Body of pancreas (tissue), 4 donors: ENCODE measurements at regions of chr12 and their contacts with region 1.

Region 1: DNA sequence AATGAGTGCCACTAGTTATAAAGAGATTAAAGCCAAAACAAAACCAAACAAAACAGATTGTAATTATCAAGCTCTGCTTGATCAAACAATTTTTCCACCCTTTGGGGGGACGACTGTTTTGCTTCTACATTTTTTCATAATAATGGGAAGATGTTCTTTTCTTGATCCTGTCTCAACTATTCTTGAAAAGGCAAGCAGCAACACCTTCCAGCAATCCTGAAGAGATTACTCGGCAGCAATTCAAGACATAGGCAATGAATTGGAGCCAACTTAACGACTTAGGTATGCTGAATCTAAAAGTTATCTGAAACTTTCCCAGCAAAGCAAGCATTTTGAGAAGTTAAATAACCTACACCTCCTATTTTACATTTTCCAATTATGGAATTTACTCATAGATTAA is 69.9 kb upstream of the SLC38A4 start:
- DNase-seq: no peak
- ATAC-seq: no peak
- H3K4me3 ChIP-seq: no peak overlapping the region
- H3K27ac ChIP-seq: no peak overlapping the region
- H3K4me1 ChIP-seq: no peaks in the 10 kb centered on the region
- H3K27me3 ChIP-seq: no peaks in the 10 kb centered on the region
- CTCF ChIP-seq: no peak
- POLR2A ChIP-seq: no peak

Region 2: DNA sequence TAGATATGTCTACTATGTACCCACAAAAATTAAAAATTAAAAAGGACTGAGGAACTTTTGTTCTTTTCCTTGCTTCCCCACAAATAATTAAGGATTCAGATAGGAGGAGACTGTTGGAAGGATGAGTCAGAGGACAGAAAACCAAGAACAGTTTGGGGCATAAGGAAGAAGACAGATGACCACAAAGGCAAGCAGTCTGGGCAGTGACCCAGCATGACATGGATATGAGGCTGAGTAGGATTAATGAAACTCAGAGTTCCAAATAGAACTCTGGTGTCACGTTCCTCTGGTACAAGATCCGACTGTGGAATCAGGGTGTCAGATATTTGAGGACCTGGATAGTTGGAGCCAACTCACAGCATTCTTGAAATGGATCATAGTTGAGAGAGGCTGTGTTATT is 19.4 kb after region 1 on chr12:
- intact Hi-C with region 1: loop called (anchors 1 kb)
- DNase-seq: peak in 2 of 4 donors; percentile 23 to 41
- ATAC-seq: no peak
- H3K4me3 ChIP-seq: no peak overlapping the region
- H3K27ac ChIP-seq: no peak overlapping the region
- H3K4me1 ChIP-seq: no peaks in the 10 kb centered on the region
- H3K27me3 ChIP-seq: no peaks in the 10 kb centered on the region
- CTCF ChIP-seq: no peak
- POLR2A ChIP-seq: no peak